ENCODE measurements at regions of chr12 and their contacts with region 1.

Region 1: DNA sequence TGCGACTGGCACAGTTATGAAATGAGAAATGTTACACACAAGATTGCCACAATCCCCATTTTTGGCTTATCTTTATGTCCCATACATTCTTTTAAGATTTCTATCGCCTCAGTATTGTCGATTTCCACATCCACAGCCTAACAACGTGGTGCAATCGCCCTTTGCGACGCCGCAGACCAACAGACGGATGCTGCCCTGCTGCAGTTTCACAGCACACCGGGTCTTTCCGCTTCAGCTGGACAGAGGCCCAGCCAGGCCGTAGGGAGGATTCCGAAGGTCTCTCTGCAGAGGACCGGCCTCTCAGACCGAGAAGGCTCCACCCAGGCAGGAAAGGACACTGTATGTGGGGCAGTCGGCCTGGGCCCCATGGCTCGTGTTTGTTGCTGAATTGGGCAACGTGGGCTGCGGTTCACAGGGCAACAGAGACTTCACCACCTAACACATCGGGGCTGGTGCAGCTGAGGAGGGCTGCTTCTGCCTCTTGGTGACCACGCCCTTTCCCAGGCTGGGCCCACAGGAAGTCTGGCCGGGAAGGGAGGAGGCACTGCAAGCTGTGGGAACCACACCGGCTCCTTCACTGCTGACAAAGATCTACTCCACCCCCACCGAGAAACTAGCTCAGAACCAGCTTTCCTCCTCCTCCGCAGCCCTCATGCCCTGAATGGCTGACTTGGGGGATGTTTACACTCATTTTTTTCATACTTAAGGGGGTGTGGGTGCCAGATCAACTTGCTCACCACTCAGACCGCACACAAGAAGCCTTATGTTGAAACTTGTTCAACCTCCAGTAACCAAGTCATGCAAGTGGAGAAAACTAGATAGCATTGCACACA is 32.9 kb upstream of the MDM1 start:
- DNase-seq: peak; percentile 86 to 94
- H3K4me3 ChIP-seq: peak overlapping the region; percentile 25 to 33
- H3K27ac ChIP-seq: peak overlapping the region; percentile 85 to 87
- H3K4me1 ChIP-seq: peaks cover 0 to 5% of the 10 kb centered on the region in 2 donors
- H3K27me3 ChIP-seq: no peaks in the 10 kb centered on the region
- CTCF ChIP-seq: peak in 2 of 4 experiments; percentile 3 to 26
- POLR2A ChIP-seq: peak; percentile 11 to 35

Region 2: DNA sequence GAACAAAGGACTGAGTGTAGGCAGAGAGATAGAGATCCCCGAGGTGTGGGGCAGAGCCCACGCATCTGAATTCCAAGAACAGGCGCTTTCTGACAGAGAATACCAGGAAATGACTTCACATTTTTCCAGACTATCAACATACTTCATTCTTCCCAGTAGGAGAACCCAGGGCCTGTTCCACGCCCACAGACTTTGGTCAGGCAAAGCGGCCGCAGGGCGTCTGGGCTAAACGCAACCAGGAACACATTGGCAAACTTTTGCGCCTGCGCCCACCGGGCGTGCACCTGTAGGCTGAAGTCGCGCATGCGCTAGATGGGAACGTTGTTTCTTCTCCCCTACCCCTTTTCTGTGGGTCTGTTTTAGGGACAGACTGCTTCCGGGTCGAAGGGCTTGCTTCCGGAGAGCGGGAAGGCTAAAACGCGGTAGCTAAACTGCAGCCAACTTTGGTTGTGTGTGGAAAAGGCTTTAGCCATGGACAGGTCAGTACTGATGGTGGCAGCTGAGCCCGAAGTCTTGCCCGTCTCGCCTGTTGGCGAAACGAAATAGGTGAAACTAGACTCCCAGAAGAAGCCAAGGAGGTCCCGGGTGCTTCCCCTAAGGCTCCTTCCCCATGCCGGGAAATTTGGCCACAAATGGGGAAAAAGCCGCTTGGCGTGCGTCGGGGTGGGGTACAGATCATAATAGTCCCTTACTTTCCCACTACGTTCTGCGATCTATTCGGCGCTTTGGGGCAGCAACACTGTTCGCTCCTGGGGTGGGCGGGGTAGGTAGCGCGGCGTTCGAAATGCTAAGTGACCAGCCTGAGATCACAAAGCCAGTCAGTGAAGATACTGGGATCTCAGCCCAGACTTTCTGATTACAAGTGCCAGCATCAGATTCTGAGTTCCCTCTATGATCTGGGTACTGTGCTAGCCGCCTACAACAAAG is 321.7 kb after region 1 on chr12 and contains the start of gene NUP107:
- intact Hi-C with region 1: loop called (anchors 10 kb)
- DNase-seq: peak; percentile 99
- H3K4me3 ChIP-seq: peak within 1 kb of the TSS; percentile 73 to 83
- H3K27ac ChIP-seq: peak within 1 kb of the TSS; percentile 78 to 80
- H3K4me1 ChIP-seq: peaks cover 0 to 11% of the 10 kb centered on the region in 2 donors
- H3K27me3 ChIP-seq: no peaks in the 10 kb centered on the region
- CTCF ChIP-seq: peak in 3 of 4 experiments; percentile 30 to 49 (median 49)
- POLR2A ChIP-seq: peak in 1 of 2 donors; percentile 49
- total RNA-seq, gene NUP107: 56.9 to 114 (median 78.9) TPM

Measured in uterus (tissue), 4 donors.